ENCODE measurements at regions of chr1 and their contacts with region 1.

Region 1: GRCh38 chr1:93196591-93196990 is 16.1 kb downstream of the CCDC18 start:
- DNase-seq: no peak
- H3K4me3 ChIP-seq: no peak overlapping the region
- H3K27ac ChIP-seq: no peak overlapping the region
- H3K4me1 ChIP-seq: no peaks in the 10 kb centered on the region
- H3K27me3 ChIP-seq: no peaks in the 10 kb centered on the region
- CTCF ChIP-seq: no peak
- POLR2A ChIP-seq: no peak

Region 2: GRCh38 chr1:93007941-93008577 is 188.5 kb before region 1 on chr1:
- intact Hi-C with region 1: no loop called
- DNase-seq: no peak
- H3K4me3 ChIP-seq: no peak overlapping the region
- H3K27ac ChIP-seq: no peak overlapping the region
- H3K4me1 ChIP-seq: no peaks in the 10 kb centered on the region
- H3K27me3 ChIP-seq: no peaks in the 10 kb centered on the region
- CTCF ChIP-seq: no peak
- POLR2A ChIP-seq: no peak

Region 3: GRCh38 chr1:93244298-93245069 is 47.9 kb after region 1 on chr1:
- intact Hi-C with region 1: loop called (anchors 5 kb)
- DNase-seq: no peak
- H3K4me3 ChIP-seq: no peak overlapping the region
- H3K27ac ChIP-seq: no peak overlapping the region
- H3K4me1 ChIP-seq: no peaks in the 10 kb centered on the region
- H3K27me3 ChIP-seq: no peaks in the 10 kb centered on the region
- CTCF ChIP-seq: no peak
- POLR2A ChIP-seq: no peak

Measured in testis (tissue), 5 donors.